ENCODE measurements at regions of chr3 and their contacts with region 1.

Region 1: DNA sequence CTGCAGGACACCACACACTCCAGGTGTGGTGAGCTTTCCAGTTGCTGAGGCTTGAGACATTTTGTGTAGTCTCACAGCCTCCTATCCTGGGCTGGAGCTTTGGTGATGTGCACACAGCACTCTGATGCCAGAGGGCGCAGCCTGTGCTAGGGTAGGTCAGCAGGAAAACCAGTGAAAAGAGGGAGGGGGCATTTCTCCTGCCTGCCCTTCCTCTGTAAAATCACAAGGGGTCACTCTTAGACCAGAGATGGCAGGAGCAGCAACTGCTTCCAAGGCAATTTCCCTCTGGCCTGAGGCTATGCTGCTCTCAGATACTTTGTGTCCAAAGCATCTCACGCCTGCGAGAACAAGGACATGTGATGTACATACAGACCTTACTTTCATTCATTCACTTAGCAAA is 16.5 kb upstream of the MUSTN1 start:
- DNase-seq: peak; percentile 39
- H3K4me3 ChIP-seq: no peak overlapping the region
- H3K27ac ChIP-seq: no peak overlapping the region
- H3K4me1 ChIP-seq: no peaks in the 10 kb centered on the region
- H3K27me3 ChIP-seq: no peaks in the 10 kb centered on the region
- CTCF ChIP-seq: peak; percentile 34 to 56
- POLR2A ChIP-seq: no peak

Region 2: DNA sequence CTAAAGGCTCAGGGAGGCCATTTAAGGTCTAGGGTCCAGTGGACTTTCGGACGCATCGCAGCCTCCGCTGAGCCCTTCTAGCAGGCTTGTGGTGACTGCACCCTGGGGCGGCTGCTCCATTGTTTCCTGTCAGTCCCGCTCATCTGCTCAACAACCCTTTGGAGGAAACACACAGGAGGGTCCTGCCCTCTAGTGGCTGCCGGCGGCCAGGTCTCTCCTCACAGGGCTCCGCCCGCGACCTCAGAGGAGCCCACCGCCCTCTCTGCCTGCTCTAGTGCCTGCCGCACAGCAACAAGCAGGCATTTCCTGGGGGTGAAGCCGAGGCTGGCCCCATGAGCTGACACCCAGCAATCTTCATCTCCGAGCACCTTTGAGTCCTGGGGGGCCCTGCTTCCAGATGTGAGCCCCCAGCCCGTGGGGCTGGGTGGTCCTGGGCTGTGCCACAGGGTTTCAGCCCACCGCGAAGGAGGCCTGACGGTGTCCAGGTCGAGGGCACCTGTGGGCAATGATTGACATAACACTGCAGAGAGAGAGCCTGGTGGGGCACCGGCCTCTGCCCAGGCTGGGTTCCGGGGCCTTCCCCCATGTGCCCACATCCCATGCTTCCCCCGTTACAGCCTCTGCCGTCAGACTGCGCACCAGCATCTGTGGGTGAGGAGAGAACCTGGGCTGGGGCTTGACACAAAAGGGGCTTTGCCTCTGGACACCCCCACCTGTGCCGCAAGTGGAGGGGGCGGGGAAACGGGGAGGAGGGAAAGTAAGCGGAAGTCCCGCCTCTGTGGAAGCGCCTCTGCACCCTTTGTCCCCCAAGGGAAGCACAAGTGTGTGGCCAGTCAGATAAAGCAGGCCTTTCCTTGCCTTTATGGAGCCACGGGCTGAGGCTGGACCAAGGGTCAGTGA is 221.6 kb after region 1 on chr3:
- CTCF ChIA-PET with region 1: interaction called, 3 read pairs
- POLR2A ChIA-PET with region 1: no interaction called
- dilution Hi-C with region 1: no loop called
- intact Hi-C with region 1: loop called (anchors 1 kb)
- DNase-seq: peak; percentile 73
- H3K4me3 ChIP-seq: peak overlapping the region; percentile 19 to 61 (median 38)
- H3K27ac ChIP-seq: peak overlapping the region; percentile 10
- H3K4me1 ChIP-seq: peaks cover 8% of the 10 kb centered on the region
- H3K27me3 ChIP-seq: peaks cover 0 to 2% of the 10 kb centered on the region in 2 experiments
- CTCF ChIP-seq: peak; percentile 98
- POLR2A ChIP-seq: no peak

Measured in endothelial cell of umbilical vein (primary cell).